Dendritic cell treated with granulocyte-macrophage colony-stimulating factor and Interleukin-4, amounts not matched to agents 40 ng/mL and 50 ng/mL, for 4 days (primary cell): ENCODE measurements at regions of chr10 and their contacts with region 1.

Region 1: DNA sequence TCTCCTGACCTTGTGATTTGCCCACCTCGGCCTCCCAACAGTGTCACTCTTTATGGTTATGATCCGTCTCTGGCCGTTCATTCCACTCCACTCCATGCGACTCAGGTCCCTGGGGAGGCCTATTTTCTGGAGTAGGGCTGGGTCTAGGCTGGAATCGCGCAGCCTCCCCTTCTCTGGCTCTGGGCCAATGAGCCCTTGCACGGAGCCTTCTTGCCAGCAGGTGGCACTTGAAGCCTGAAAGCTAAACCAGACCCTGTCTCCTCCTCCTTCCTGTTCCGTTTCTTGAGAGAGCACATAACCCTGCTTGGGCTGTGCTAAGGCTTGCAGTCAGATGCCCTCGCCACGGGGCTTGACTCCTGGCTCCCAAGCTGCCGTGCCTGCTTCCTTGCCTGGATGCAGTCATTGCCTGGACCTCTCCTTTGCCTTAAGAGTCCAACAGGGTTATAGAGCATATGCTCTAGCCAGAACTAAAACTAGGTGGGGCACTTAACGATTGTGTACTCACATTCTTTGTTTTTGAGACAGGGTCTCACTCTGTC is 9.6 kb upstream of the DNAJB12 start:
- H3K4me3 Mint-ChIP-seq: no peak overlapping the region
- H3K27ac Mint-ChIP-seq: peak overlapping the region; percentile 11
- H3K4me1 Mint-ChIP-seq: peaks cover 13% of the 10 kb centered on the region
- H3K27me3 Mint-ChIP-seq: no peaks in the 10 kb centered on the region

Region 2: DNA sequence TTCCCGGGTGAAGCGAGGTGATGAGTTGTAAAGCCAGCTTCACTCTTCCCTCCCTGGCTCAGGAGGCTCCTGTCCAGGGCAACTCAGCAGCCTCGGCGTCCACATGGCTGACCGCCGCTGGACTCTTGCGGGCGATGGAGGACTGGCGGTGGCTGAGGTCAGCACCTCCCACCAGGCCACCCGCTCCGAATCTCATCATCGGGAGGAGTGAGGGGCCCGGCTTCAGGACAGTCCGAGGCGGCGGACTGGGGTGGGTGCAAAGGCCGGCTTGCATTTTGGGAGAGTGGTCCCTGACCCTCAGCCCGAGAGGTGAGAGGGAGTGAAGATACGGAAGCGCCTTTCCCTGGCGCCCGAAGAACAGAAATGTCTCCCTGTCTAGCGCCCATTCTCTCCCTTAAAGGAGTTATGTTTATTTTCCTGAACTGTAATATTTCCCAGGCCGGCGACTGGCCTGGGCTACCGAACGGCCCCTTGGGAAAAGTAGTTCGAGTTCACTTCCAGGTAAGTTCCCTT is 10.3 kb before region 1 on chr10:
- intact Hi-C with region 1: no loop called
- H3K4me3 Mint-ChIP-seq: peak overlapping the region; percentile 99
- H3K27ac Mint-ChIP-seq: peak overlapping the region; percentile 98
- H3K4me1 Mint-ChIP-seq: peaks cover 54% of the 10 kb centered on the region
- H3K27me3 Mint-ChIP-seq: no peaks in the 10 kb centered on the region

Region 3: GRCh38 chr10:72567884-72568640 is 203.8 kb after region 1 on chr10:
- intact Hi-C with region 1: loop called (anchors 10 kb)
- H3K4me3 Mint-ChIP-seq: no peak overlapping the region
- H3K27ac Mint-ChIP-seq: no peak overlapping the region
- H3K4me1 Mint-ChIP-seq: peaks cover 34% of the 10 kb centered on the region
- H3K27me3 Mint-ChIP-seq: no peaks in the 10 kb centered on the region

Region 4: GRCh38 chr10:72625608-72626443 is 261.5 kb after region 1 on chr10 and contains the start of gene MICU1:
- intact Hi-C with region 1: loop called (anchors 10 kb)
- H3K4me3 Mint-ChIP-seq: peak within 1 kb of the TSS; percentile 84
- H3K27ac Mint-ChIP-seq: peak within 1 kb of the TSS; percentile 86
- H3K4me1 Mint-ChIP-seq: peaks cover 16% of the 10 kb centered on the region
- H3K27me3 Mint-ChIP-seq: no peaks in the 10 kb centered on the region

Region 5: GRCh38 chr10:72692057-72692910 is 328.0 kb after region 1 on chr10 and contains the start of gene MCU:
- intact Hi-C with region 1: loop called (anchors 10 kb)
- H3K4me3 Mint-ChIP-seq: peak within 1 kb of the TSS; percentile 77
- H3K27ac Mint-ChIP-seq: peak within 1 kb of the TSS; percentile 63
- H3K4me1 Mint-ChIP-seq: peaks cover 32% of the 10 kb centered on the region
- H3K27me3 Mint-ChIP-seq: no peaks in the 10 kb centered on the region

Region 6: GRCh38 chr10:72834183-72834825 is 470.0 kb after region 1 on chr10:
- intact Hi-C with region 1: loop called (anchors 1 kb)
- H3K4me3 Mint-ChIP-seq: no peak overlapping the region
- H3K27ac Mint-ChIP-seq: no peak overlapping the region
- H3K4me1 Mint-ChIP-seq: no peaks in the 10 kb centered on the region
- H3K27me3 Mint-ChIP-seq: no peaks in the 10 kb centered on the region

Region 7: GRCh38 chr10:72875250-72876055 is 511.1 kb after region 1 on chr10:
- intact Hi-C with region 1: loop called (anchors 1 kb)
- H3K4me3 Mint-ChIP-seq: no peak overlapping the region
- H3K27ac Mint-ChIP-seq: no peak overlapping the region
- H3K4me1 Mint-ChIP-seq: no peaks in the 10 kb centered on the region
- H3K27me3 Mint-ChIP-seq: no peaks in the 10 kb centered on the region